ENCODE measurements at regions of chr12 and their contacts with region 1.

Region 1: GRCh38 chr12:111396726-111397445 is 8.8 kb upstream of the SH2B3 start:
- DNase-seq: peak; percentile 61 to 76
- ATAC-seq: peak; percentile 84 to 86
- H3K4me3 ChIP-seq: peak overlapping the region; percentile 8 to 44 (median 25)
- H3K27ac ChIP-seq: peak overlapping the region; percentile 27 to 66 (median 62)
- H3K4me1 ChIP-seq: peaks cover 0 to 4% of the 10 kb centered on the region in 2 donors
- H3K27me3 ChIP-seq: no peaks in the 10 kb centered on the region
- CTCF ChIP-seq: peak; percentile 99 to 100 (median 99)
- POLR2A ChIP-seq: no peak

Region 2: GRCh38 chr12:111224186-111225066 is 172.5 kb before region 1 on chr12:
- in situ Hi-C with region 1: no loop called
- intact Hi-C with region 1: no loop called
- DNase-seq: no peak
- ATAC-seq: no peak
- H3K4me3 ChIP-seq: no peak overlapping the region
- H3K27ac ChIP-seq: no peak overlapping the region
- H3K4me1 ChIP-seq: no peaks in the 10 kb centered on the region
- H3K27me3 ChIP-seq: no peaks in the 10 kb centered on the region
- CTCF ChIP-seq: no peak
- POLR2A ChIP-seq: no peak

Region 3: DNA sequence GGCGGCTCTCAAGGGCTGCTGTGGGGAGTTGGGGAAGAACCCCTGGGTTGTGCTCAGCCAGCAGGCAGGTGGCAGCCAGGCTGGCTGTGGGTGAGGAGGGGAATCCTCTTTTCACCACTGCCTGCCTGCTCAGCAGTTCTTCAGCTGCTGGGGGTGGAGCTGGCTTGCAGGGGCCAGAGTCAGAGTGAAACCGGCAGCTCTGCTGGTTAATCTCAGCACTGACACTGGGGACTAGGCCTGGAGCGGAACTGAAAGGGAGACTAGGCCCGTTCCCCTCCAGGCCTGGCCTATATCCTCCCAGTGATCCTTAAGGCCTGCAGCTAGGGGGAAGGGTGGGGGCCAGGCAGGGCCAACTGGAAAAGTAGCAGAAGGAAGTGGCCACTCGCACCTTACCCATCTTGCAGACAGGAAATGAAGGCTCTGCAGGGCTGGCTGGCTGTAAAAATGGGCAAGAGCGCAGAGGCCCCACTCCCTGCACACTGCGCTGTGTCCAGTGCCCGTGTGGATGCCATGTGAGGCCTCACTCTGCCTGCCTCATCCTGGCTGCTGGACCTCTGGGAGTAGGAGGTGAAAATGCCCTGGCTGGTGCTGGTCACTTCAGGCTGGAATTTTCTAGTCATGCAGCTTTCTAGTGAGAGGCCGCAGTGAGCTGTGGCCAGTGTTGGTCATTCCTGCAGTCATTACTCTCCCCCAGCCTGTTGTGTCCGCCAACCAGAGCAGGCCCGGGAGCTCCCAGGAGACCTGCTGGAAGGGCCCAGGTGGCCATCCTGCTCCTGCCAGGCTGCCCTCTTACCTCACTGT is 48.2 kb after region 1 on chr12:
- in situ Hi-C with region 1: loop called (anchors 5 kb)
- intact Hi-C with region 1: no loop called
- DNase-seq: peak; percentile 45 to 67
- ATAC-seq: peak in 1 of 2 donors; percentile 24
- H3K4me3 ChIP-seq: no peak overlapping the region
- H3K27ac ChIP-seq: peak overlapping the region; percentile 69 to 87 (median 73)
- H3K4me1 ChIP-seq: peaks cover 66 to 69% of the 10 kb centered on the region in 2 donors
- H3K27me3 ChIP-seq: no peaks in the 10 kb centered on the region
- CTCF ChIP-seq: no peak
- POLR2A ChIP-seq: no peak

Region 4: DNA sequence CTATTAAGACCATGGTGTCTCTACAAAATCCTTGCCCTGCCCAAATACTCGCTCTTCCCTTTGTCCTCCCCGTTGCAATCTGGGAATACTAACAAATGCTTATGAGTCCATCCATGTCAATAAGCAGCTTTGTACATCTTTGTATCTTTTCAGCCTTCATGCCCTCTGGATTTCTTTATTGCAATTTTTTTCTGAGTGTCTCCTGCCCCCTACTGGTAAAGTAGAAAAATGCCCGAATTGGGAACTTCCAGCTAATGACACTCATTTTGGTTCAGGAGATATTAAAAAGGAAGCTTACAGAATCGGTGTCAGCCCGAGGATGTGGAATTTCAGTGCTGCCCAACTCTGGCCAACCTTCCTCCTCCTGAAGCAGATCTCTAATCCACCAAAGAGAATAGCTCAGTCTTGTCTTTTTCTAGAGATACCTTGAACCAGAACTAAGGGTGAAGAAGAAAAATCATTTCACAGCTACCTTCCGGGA is 54.8 kb after region 1 on chr12:
- in situ Hi-C with region 1: loop called (anchors 5 kb)
- intact Hi-C with region 1: loop called (anchors 1 kb)
- DNase-seq: no peak
- ATAC-seq: no peak
- H3K4me3 ChIP-seq: no peak overlapping the region
- H3K27ac ChIP-seq: peak overlapping the region; percentile 73 to 87 (median 82)
- H3K4me1 ChIP-seq: peaks cover 35 to 43% of the 10 kb centered on the region in 2 donors
- H3K27me3 ChIP-seq: no peaks in the 10 kb centered on the region
- CTCF ChIP-seq: peak; percentile 67 to 85 (median 84)
- POLR2A ChIP-seq: no peak

Region 5: GRCh38 chr12:111529424-111530368 is 132.8 kb after region 1 on chr12:
- in situ Hi-C with region 1: loop called in 3 of 4 experiments (anchors 5 to 25 kb)
- intact Hi-C with region 1: loop called (anchors 1 kb)
- DNase-seq: no peak
- ATAC-seq: no peak
- H3K4me3 ChIP-seq: no peak overlapping the region
- H3K27ac ChIP-seq: no peak overlapping the region
- H3K4me1 ChIP-seq: no peaks in the 10 kb centered on the region
- H3K27me3 ChIP-seq: no peaks in the 10 kb centered on the region
- CTCF ChIP-seq: peak; percentile 19 to 58 (median 42)
- POLR2A ChIP-seq: no peak

Region 6: DNA sequence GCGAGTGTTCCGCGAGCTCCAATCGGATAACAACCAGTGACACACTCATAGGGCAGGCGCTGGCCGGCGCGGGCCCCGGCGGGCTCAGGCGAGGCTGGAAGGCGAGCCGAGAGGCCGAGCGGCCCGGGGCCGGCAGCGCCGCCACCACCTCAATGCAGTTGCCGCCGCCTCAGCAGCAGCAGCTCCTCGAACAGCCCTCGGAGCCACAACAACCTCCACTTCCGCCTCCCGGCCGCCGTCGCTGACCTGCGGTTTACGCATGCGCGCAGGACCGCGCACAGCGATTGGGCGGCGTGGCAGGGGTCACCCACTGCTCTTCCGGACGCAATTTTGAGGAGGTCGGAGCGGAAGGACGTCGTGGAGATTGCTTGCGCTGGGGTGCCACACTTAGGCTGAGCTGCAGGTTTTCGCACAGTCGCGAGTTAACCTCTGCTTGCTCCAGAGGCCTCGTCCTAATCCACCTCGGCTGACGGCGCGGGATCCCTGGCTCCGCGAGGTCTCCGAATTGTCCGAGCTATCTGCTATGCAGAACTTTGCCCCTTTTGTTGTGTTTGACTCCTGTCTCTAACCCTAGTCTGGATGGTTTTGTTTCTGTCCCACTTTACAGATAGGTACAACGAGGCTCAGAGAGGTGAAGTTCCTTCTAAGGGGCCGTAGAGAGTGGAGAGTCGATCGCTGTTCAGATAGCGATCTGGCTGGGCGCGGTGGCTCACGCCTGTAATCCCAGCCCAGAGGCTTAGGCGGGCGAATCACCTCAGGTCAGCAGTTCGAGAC is 289.0 kb after region 1 on chr12 and contains the starts of genes ACAD10 and BRAP:
- in situ Hi-C with region 1: loop called in 1 of 4 experiments (anchors 25 kb)
- intact Hi-C with region 1: no loop called
- DNase-seq: peak; percentile 85 to 94
- ATAC-seq: peak; percentile 96 to 98
- H3K4me3 ChIP-seq: peak within 1 kb of the TSS; percentile 75 to 91 (median 82)
- H3K27ac ChIP-seq: peak within 1 kb of the TSS; percentile 82 to 95 (median 88)
- H3K4me1 ChIP-seq: peaks cover 26% of the 10 kb centered on the region in 2 donors
- H3K27me3 ChIP-seq: no peaks in the 10 kb centered on the region
- CTCF ChIP-seq: no peak
- POLR2A ChIP-seq: peak; percentile 74 to 87
- total RNA-seq, gene ACAD10: 8.3 to 12.6 (median 11.7) TPM
- total RNA-seq, gene BRAP: 25.2 to 38.5 (median 29.2) TPM